ENCODE measurements at regions of chr19 and their contacts with region 1.

Region 1: DNA sequence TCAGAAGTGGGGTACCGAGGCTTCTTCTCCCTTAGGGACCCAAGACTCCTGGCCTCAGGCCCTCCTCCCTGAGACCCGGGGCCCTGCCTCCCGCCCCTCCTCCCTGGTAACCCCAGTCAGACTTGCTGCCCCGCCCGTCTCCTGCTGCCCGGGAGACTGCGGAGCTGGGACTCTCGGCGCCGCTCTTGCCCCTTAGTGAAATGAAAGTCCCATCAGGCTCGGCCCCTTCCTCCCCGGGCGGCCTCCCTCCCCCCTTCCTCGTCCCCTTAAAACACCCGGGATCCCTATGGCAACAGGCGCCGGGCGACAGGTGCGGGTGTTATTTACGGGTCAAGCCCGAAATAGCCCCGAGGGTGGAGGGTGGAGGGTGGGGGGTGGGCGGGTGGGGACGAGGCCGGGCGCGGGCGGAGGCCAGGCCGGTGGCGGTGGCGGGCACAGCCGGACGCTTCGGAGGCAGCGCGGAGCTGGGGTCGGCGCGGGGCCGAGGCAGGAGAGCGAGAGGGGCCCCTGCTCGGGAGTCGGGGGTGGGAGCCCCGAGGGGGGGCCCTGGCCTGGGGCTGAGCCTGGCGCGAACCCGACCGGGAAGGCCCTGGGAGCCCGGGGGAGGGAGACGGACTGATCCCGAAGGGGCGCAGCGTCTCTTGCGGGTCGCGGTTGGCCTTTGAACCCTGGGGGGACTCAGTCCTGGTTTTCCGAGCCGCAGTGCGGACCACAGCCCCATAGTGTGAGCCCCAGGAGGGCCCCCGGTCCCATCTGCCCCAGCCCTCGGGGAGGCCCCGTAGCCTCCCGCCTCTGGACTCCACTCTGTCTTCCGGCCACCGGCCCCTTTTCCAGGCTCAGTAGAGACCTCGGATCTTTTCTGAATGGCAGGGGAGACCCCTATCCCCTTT is at the start of gene CACNG6:
- DNase-seq: peak in 1 of 2 experiments; percentile 77
- H3K4me3 ChIP-seq: peak within 1 kb of the TSS; percentile 36 to 64 (median 44); a peak in 7 of 8 replicates
- H3K27ac ChIP-seq: no peak within 1 kb of the TSS
- H3K4me1 ChIP-seq: peaks cover 0 to 15% (median 7%) of the 10 kb centered on the region in 4 experiments; a peak in 6 of 7 replicates
- H3K27me3 ChIP-seq: peaks cover 2 to 47% (median 32%) of the 10 kb centered on the region in 4 experiments
- CTCF ChIP-seq: no peak
- EP300 ChIP-seq: no peak
- POLR2A ChIP-seq: no peak
- RAD21 ChIP-seq: peak in 1 of 2 experiments; percentile 13; a peak in 1 of 4 replicates
- total RNA-seq, gene CACNG6: 1.2 and 1.4 TPM in 2 replicates

Region 2: GRCh38 chr19:54002495-54003315 is 11.2 kb after region 1 on chr19:
- CTCF ChIA-PET with region 1: interaction called, 3 read pairs
- POLR2A ChIA-PET with region 1: interaction called, 21 read pairs
- DNase-seq: no peak
- H3K4me3 ChIP-seq: no peak overlapping the region
- H3K27ac ChIP-seq: no peak overlapping the region
- H3K4me1 ChIP-seq: peaks cover 0 to 6% (median 0%) of the 10 kb centered on the region in 4 experiments; a peak in 2 of 7 replicates
- H3K27me3 ChIP-seq: peaks cover 0 to 12% (median 3%) of the 10 kb centered on the region in 4 experiments; a peak in 4 of 7 replicates
- CTCF ChIP-seq: no peak
- EP300 ChIP-seq: no peak
- POLR2A ChIP-seq: no peak
- RAD21 ChIP-seq: no peak

Region 3: GRCh38 chr19:54009440-54009839 is 18.0 kb after region 1 on chr19:
- CTCF ChIA-PET with region 1: interaction called, 3 read pairs
- POLR2A ChIA-PET with region 1: interaction called, 21 read pairs
- DNase-seq: no peak
- H3K4me3 ChIP-seq: no peak overlapping the region
- H3K27ac ChIP-seq: no peak overlapping the region
- H3K4me1 ChIP-seq: peaks cover 0 to 7% (median 4%) of the 10 kb centered on the region in 4 experiments; a peak in 2 of 7 replicates
- H3K27me3 ChIP-seq: no peaks in the 10 kb centered on the region
- CTCF ChIP-seq: no peak
- EP300 ChIP-seq: no peak
- POLR2A ChIP-seq: no peak
- RAD21 ChIP-seq: no peak

Measured in H1 (cell line).